PC-9 (cell line): ENCODE measurements at regions of chr2 and their contacts with region 1.

Region 1: GRCh38 chr2:37231241-37232130 is at the starts of genes CEBPZ and NDUFAF7:
- DNase-seq: peak; percentile 83 to 95
- H3K4me3 ChIP-seq: peak within 1 kb of the TSS; percentile 88
- H3K27ac ChIP-seq: peak within 1 kb of the TSS; percentile 67
- H3K4me1 ChIP-seq: peaks cover 26% of the 10 kb centered on the region
- H3K27me3 ChIP-seq: no peaks in the 10 kb centered on the region
- CTCF ChIP-seq: no peak
- total RNA-seq, gene CEBPZ: 29.2 and 35.7 TPM in 2 replicates
- total RNA-seq, gene NDUFAF7: 18.8 and 21.9 TPM in 2 replicates

Region 2: DNA sequence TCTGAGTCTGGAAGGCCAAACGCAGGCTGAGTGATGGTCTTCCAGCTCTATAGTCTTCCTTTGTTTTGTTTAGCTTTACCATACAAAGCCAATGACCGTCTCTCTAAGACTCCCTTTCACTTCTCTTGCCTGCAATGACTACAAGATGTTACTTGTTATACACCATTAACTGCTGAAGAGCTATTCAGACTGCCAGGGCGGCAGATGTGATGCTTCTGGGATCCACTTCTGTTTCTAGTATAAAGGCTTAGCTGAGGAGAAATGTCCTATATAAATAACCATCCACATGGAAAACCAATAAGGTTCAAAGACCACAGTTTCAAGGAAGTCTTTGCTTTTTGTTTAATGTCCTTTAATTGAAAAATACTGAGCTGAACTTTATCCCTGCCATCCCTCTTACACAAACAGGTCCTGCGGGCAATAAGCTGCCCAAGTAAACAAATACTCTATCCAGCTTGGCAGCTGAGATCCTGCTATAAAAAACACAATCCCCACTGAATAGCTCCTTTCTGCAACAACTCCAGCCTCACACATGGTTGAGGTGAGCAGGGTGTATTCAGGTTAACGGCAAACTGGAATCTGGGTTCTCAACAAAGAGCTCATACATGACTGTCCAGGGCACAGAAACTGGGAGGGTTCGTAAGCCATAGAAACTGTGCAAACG is 410.4 kb before region 1 on chr2:
- CTCF ChIA-PET with region 1: no interaction called
- POLR2A ChIA-PET with region 1: no interaction called
- intact Hi-C with region 1: no loop called
- DNase-seq: peak in 1 of 2 experiments; percentile 20
- H3K4me3 ChIP-seq: no peak overlapping the region
- H3K27ac ChIP-seq: no peak overlapping the region
- H3K4me1 ChIP-seq: no peaks in the 10 kb centered on the region
- H3K27me3 ChIP-seq: no peaks in the 10 kb centered on the region
- CTCF ChIP-seq: no peak

Region 3: GRCh38 chr2:37156857-37157714 is 74.4 kb before region 1 on chr2 and contains the start of gene EIF2AK2:
- CTCF ChIA-PET with region 1: no interaction called
- POLR2A ChIA-PET with region 1: no interaction called
- intact Hi-C with region 1: loop called (anchors 5 kb)
- DNase-seq: peak; percentile 77 to 85
- H3K4me3 ChIP-seq: peak within 1 kb of the TSS; percentile 95
- H3K27ac ChIP-seq: peak within 1 kb of the TSS; percentile 74
- H3K4me1 ChIP-seq: peaks cover 21% of the 10 kb centered on the region
- H3K27me3 ChIP-seq: no peaks in the 10 kb centered on the region
- CTCF ChIP-seq: no peak
- total RNA-seq, gene EIF2AK2: 39.8 and 61.2 TPM in 2 replicates

Region 4: GRCh38 chr2:37582481-37583220 is 351.2 kb after region 1 on chr2:
- CTCF ChIA-PET with region 1: no interaction called
- POLR2A ChIA-PET with region 1: no interaction called
- intact Hi-C with region 1: no loop called
- DNase-seq: no peak
- H3K4me3 ChIP-seq: no peak overlapping the region
- H3K27ac ChIP-seq: no peak overlapping the region
- H3K4me1 ChIP-seq: peaks cover 49% of the 10 kb centered on the region
- H3K27me3 ChIP-seq: no peaks in the 10 kb centered on the region
- CTCF ChIP-seq: no peak